GM23248 (cell line): ENCODE measurements at regions of chr7 and their contacts with region 1.

Region 1: GRCh38 chr7:108497082-108497725 is 28.7 kb downstream of the PNPLA8 start:
- DNase-seq: peak; percentile 69
- H3K4me3 ChIP-seq: no peak overlapping the region
- H3K27ac ChIP-seq: no peak overlapping the region
- H3K4me1 ChIP-seq: no peaks in the 10 kb centered on the region
- H3K27me3 ChIP-seq: no peaks in the 10 kb centered on the region

Region 2: GRCh38 chr7:108181073-108181985 is 315.9 kb before region 1 on chr7:
- in situ Hi-C with region 1: loop called (anchors 25 kb)
- DNase-seq: peak; percentile 57
- H3K4me3 ChIP-seq: no peak overlapping the region
- H3K27ac ChIP-seq: no peak overlapping the region
- H3K4me1 ChIP-seq: no peaks in the 10 kb centered on the region
- H3K27me3 ChIP-seq: no peaks in the 10 kb centered on the region

Region 3: GRCh38 chr7:109456120-109456519 is 958.9 kb after region 1 on chr7:
- in situ Hi-C with region 1: no loop called
- DNase-seq: no peak
- H3K4me3 ChIP-seq: no peak overlapping the region
- H3K27ac ChIP-seq: no peak overlapping the region
- H3K4me1 ChIP-seq: no peaks in the 10 kb centered on the region
- H3K27me3 ChIP-seq: no peaks in the 10 kb centered on the region